MCF 10A (cell line): ENCODE measurements at regions of chr2 and their contacts with region 1.

Region 1: DNA sequence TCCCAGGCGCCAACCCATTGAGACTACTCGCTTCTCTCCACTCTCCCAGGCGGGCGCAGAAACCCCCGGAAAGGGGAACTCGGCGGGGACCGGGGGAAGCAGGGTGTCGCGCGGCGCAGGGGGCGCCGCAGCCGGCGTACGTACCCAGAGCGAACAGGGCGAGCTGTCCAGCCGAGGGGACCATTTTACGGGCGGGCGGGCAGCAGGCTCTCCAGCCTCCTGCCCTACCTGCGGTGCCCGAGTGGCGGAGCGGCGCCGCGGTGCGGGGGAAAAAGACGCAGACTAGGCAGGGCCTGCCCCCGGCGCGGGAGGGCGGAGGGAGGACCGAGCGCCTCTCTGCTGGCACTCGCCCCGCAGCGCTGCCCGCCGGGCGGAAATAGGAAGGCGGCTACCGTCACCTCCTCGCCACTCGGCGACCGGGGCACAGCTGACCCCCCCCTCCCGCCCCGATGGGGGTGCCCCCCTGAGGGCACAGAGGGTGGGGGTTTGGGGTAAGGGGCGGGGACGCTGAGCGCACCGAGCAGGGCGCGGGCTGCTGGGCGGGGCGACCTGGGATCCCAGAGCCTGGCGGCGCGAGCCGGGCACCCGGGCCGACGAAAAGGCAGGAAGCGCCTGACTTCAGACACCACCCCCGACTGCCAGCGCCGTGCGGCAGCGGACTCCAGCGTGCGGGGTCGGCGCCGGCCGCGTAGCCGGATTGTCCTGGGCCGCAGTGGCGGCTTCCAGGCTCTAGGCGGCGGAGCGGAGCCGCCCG is at the start of gene TGFA:
- DNase-seq: peak; percentile 89
- H3K4me3 Mint-ChIP-seq: peak within 1 kb of the TSS; percentile 93
- H3K27ac Mint-ChIP-seq: peak within 1 kb of the TSS; percentile 83
- H3K4me1 Mint-ChIP-seq: peaks cover 15% of the 10 kb centered on the region
- H3K27me3 Mint-ChIP-seq: no peaks in the 10 kb centered on the region
- CTCF ChIP-seq: peak; percentile 84
- total RNA-seq, gene TGFA: 17.9 and 22.5 TPM in 2 replicates

Region 2: DNA sequence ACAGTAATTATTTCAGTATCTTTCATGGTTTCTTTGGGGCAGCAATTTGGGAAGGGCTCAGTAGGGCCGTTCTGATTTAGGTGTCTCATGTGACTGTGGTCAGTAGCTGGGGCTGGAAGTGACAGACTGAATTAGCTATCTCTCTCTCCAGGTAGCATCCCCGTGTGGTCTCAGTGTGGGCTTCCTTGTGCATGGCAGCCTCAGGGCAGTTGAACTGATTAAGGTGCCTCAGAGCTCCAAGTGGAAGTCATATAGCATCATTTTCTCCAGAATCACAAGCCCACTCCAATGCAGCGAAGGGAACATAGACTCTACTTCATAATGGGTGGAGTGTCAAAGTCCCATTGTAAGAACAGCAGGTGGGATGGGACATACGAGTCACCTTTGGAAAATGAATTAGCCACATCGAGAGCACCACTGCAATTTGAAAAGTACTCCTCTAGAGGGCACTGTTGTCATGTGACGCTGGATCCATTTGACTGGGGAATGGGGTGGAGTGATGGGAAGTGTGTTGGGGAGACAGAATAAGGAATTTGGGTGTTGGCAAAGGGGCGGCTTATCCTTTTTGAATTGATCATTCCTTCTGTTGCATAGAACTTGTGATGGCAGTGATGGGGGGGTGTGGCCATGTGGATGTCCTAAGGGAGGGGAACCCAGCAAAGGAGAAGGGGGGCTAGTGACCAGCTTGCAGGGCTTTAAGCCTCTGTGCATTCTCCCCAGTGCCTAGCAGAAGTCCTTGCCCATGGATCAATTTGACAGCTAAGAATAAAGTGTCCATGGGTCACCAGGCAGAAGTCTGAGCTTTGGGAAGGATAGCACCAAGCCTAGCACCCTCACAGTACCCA is 212.6 kb before region 1 on chr2:
- CTCF ChIA-PET with region 1: interaction called, 14 read pairs
- POLR2A ChIA-PET with region 1: interaction called, 4 read pairs
- intact Hi-C with region 1: loop called (anchors 1 kb)
- DNase-seq: peak; percentile 82
- H3K4me3 Mint-ChIP-seq: no peak overlapping the region
- H3K27ac Mint-ChIP-seq: no peak overlapping the region
- H3K4me1 Mint-ChIP-seq: peaks cover 17% of the 10 kb centered on the region
- H3K27me3 Mint-ChIP-seq: no peaks in the 10 kb centered on the region
- CTCF ChIP-seq: peak; percentile 81

Region 3: GRCh38 chr2:70516596-70516995 is 37.2 kb before region 1 on chr2:
- CTCF ChIA-PET with region 1: interaction called, 3 read pairs
- POLR2A ChIA-PET with region 1: interaction called, 12 read pairs
- intact Hi-C with region 1: no loop called
- DNase-seq: peak; percentile 53
- H3K4me3 Mint-ChIP-seq: no peak overlapping the region
- H3K27ac Mint-ChIP-seq: peak overlapping the region; percentile 23
- H3K4me1 Mint-ChIP-seq: peaks cover 38% of the 10 kb centered on the region
- H3K27me3 Mint-ChIP-seq: no peaks in the 10 kb centered on the region
- CTCF ChIP-seq: no peak

Region 4: GRCh38 chr2:70541481-70542020 is 12.2 kb before region 1 on chr2:
- CTCF ChIA-PET with region 1: interaction called, 13 read pairs
- POLR2A ChIA-PET with region 1: interaction called, 45 read pairs
- intact Hi-C with region 1: loop called (anchors 1 kb)
- DNase-seq: peak; percentile 87
- H3K4me3 Mint-ChIP-seq: peak overlapping the region; percentile 56
- H3K27ac Mint-ChIP-seq: peak overlapping the region; percentile 76
- H3K4me1 Mint-ChIP-seq: peaks cover 24% of the 10 kb centered on the region
- H3K27me3 Mint-ChIP-seq: no peaks in the 10 kb centered on the region
- CTCF ChIP-seq: peak; percentile 19

Region 5: GRCh38 chr2:70607121-70607561 is 53.4 kb after region 1 on chr2:
- CTCF ChIA-PET with region 1: interaction called, 4 read pairs
- POLR2A ChIA-PET with region 1: interaction called, 13 read pairs
- intact Hi-C with region 1: no loop called
- DNase-seq: peak; percentile 85
- H3K4me3 Mint-ChIP-seq: no peak overlapping the region
- H3K27ac Mint-ChIP-seq: peak overlapping the region; percentile 82
- H3K4me1 Mint-ChIP-seq: peaks cover 18% of the 10 kb centered on the region
- H3K27me3 Mint-ChIP-seq: no peaks in the 10 kb centered on the region
- CTCF ChIP-seq: no peak